ENCODE measurements at regions of chr5 and their contacts with region 1.

Region 1: GRCh38 chr5:172958331-172959046 is 735 bp upstream of the RPL26L1 start:
- DNase-seq: no peak
- H3K4me3 ChIP-seq: peak overlapping the region; percentile 51
- CTCF ChIP-seq: no peak

Region 2: DNA sequence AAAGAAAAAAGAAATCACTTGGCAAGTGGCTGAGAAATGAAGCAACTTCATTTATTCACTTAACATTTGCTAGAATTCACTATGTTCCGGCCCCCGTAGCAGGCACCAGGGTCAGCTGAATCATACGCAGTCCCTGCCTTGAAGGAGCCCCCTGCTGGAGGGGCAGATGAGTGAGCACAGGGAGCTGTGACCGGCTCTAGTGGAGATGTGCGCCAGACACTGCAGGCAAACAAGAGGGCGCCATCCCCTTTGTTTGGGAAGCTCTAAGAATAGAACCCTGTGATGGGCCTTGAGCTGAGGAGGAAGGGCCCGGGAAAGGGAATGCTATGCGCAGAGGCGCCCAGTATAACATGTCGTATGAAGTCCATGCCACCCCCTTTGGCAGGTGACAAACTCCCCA is 19.4 kb before region 1 on chr5:
- CTCF ChIA-PET with region 1: interaction called, 18 read pairs
- POLR2A ChIA-PET with region 1: interaction called, 5 read pairs
- DNase-seq: no peak
- H3K4me3 ChIP-seq: no peak overlapping the region
- CTCF ChIP-seq: peak; percentile 58

Region 3: GRCh38 chr5:172973127-172973916 is 14.8 kb after region 1 on chr5:
- CTCF ChIA-PET with region 1: interaction called, 62 read pairs
- POLR2A ChIA-PET with region 1: interaction called, 3 read pairs
- DNase-seq: no peak
- H3K4me3 ChIP-seq: no peak overlapping the region
- CTCF ChIP-seq: no peak